Panc1 (cell line): ENCODE measurements at regions of chr15 and their contacts with region 1.

Region 1: GRCh38 chr15:45187894-45188830 is at the start of gene SHF:
- DNase-seq: no peak
- ATAC-seq: peak; percentile 76
- H3K4me3 ChIP-seq: peak within 1 kb of the TSS; percentile 55 to 75
- H3K27ac ChIP-seq: no peak within 1 kb of the TSS
- H3K4me1 ChIP-seq: no peaks in the 10 kb centered on the region; the same call in 1 of the 2 replicates
- H3K27me3 ChIP-seq: no peaks in the 10 kb centered on the region
- CTCF ChIP-seq: no peak
- total RNA-seq, gene SHF: 3.0 TPM

Region 2: GRCh38 chr15:45112586-45113379 is 75.4 kb before region 1 on chr15:
- CTCF ChIA-PET with region 1: no interaction called
- POLR2A ChIA-PET with region 1: no interaction called
- in situ Hi-C with region 1: no loop called
- intact Hi-C with region 1: no loop called
- DNase-seq: no peak
- ATAC-seq: peak; percentile 72
- H3K4me3 ChIP-seq: peak overlapping the region; percentile 24 to 31
- H3K27ac ChIP-seq: no peak overlapping the region
- H3K4me1 ChIP-seq: peaks cover 14% of the 10 kb centered on the region
- H3K27me3 ChIP-seq: peaks cover 21% of the 10 kb centered on the region
- CTCF ChIP-seq: no peak

Region 3: GRCh38 chr15:45166834-45167630 is 21.1 kb before region 1 on chr15:
- CTCF ChIA-PET with region 1: interaction called, 3 read pairs
- POLR2A ChIA-PET with region 1: interaction called, 16 read pairs
- in situ Hi-C with region 1: no loop called
- intact Hi-C with region 1: no loop called
- DNase-seq: peak; percentile 58
- ATAC-seq: peak; percentile 92
- H3K4me3 ChIP-seq: peak overlapping the region; percentile 67 to 68
- H3K27ac ChIP-seq: peak overlapping the region; percentile 84
- H3K4me1 ChIP-seq: peaks cover 8% of the 10 kb centered on the region
- H3K27me3 ChIP-seq: no peaks in the 10 kb centered on the region
- CTCF ChIP-seq: peak; percentile 85